Activated CD4-positive, alpha-beta T cell treated with anti-CD3 and anti-CD28 coated beads, Interleukin-2, amount 10 ng/mL, durations not matched to agents 24 days and 14 days (primary cell): ENCODE measurements at regions of chr10 and their contacts with region 1.

Region 1: GRCh38 chr10:50624866-50625692 is 1.3 kb upstream of the SGMS1 start:
- DNase-seq: peak; percentile 86
- H3K4me3 Mint-ChIP-seq: peak overlapping the region; percentile 90
- H3K27ac Mint-ChIP-seq: peak overlapping the region; percentile 92
- H3K4me1 Mint-ChIP-seq: peaks cover 34% of the 10 kb centered on the region
- H3K27me3 Mint-ChIP-seq: peaks cover 3% of the 10 kb centered on the region

Region 2: GRCh38 chr10:50325449-50326171 is 299.5 kb before region 1 on chr10:
- intact Hi-C with region 1: loop called (anchors 2 kb)
- DNase-seq: peak; percentile 74
- H3K4me3 Mint-ChIP-seq: peak overlapping the region; percentile 57
- H3K27ac Mint-ChIP-seq: peak overlapping the region; percentile 39
- H3K4me1 Mint-ChIP-seq: peaks cover 47% of the 10 kb centered on the region
- H3K27me3 Mint-ChIP-seq: no peaks in the 10 kb centered on the region

Region 3: GRCh38 chr10:50417886-50418830 is 206.9 kb before region 1 on chr10:
- intact Hi-C with region 1: loop called (anchors 1 kb)
- DNase-seq: peak; percentile 88
- H3K4me3 Mint-ChIP-seq: peak overlapping the region; percentile 86
- H3K27ac Mint-ChIP-seq: peak overlapping the region; percentile 82
- H3K4me1 Mint-ChIP-seq: peaks cover 45% of the 10 kb centered on the region
- H3K27me3 Mint-ChIP-seq: no peaks in the 10 kb centered on the region

Region 4: GRCh38 chr10:50508315-50509051 is 116.6 kb before region 1 on chr10:
- intact Hi-C with region 1: loop called (anchors 2 kb)
- DNase-seq: peak; percentile 75
- H3K4me3 Mint-ChIP-seq: no peak overlapping the region
- H3K27ac Mint-ChIP-seq: no peak overlapping the region
- H3K4me1 Mint-ChIP-seq: peaks cover 66% of the 10 kb centered on the region
- H3K27me3 Mint-ChIP-seq: no peaks in the 10 kb centered on the region

Region 5: GRCh38 chr10:50574305-50574704 is 50.8 kb before region 1 on chr10:
- intact Hi-C with region 1: loop called (anchors 2 kb)
- DNase-seq: no peak
- H3K4me3 Mint-ChIP-seq: no peak overlapping the region
- H3K27ac Mint-ChIP-seq: no peak overlapping the region
- H3K4me1 Mint-ChIP-seq: peaks cover 11% of the 10 kb centered on the region
- H3K27me3 Mint-ChIP-seq: no peaks in the 10 kb centered on the region

Region 6: DNA sequence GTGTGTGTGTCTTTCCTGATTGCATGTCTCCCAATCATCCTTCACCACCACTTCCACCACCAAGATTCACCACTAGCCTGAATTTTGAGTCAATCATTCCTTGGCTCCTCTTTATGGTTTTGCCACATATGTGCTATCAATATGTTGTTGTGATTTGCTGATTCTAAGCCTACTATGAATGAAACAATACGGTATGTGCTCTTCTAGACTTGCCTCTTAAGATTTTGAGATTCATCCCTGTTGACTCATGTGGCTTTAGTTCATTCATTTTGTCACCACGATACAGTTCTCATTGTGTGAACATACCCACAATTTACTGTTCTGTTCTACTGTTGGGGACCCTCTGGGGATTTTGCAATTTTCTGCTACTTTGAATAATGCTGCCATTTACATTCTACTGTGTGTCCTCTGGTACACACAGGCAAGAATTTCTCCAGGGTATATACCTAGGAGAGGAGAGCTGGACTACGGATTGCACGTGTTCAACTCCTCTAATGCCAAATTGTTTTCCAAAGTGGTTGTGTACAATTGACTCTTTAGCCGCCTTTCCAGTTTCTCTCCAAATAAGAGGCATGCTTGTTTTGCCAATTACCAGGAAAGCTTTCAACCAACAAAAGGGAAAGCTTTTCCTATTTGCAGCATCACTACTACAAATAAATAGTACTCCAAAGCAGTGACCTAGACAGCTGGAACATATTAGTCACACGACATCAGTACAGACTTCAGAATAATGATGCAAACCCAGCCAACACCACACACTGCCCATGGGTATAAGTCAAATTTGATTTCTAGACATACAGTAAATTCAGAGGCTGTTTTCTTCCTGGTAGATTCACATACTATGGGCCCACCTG is 31.3 kb before region 1 on chr10:
- intact Hi-C with region 1: no loop called
- DNase-seq: no peak
- H3K4me3 Mint-ChIP-seq: no peak overlapping the region
- H3K27ac Mint-ChIP-seq: no peak overlapping the region
- H3K4me1 Mint-ChIP-seq: peaks cover 5% of the 10 kb centered on the region
- H3K27me3 Mint-ChIP-seq: no peaks in the 10 kb centered on the region

Region 7: GRCh38 chr10:50636618-50637579 is 11.8 kb after region 1 on chr10:
- intact Hi-C with region 1: loop called (anchors 1 kb)
- DNase-seq: peak; percentile 83
- H3K4me3 Mint-ChIP-seq: peak overlapping the region; percentile 65
- H3K27ac Mint-ChIP-seq: peak overlapping the region; percentile 73
- H3K4me1 Mint-ChIP-seq: peaks cover 30% of the 10 kb centered on the region
- H3K27me3 Mint-ChIP-seq: peaks cover 60% of the 10 kb centered on the region

Region 8: GRCh38 chr10:50648089-50648934 is 23.2 kb after region 1 on chr10:
- intact Hi-C with region 1: no loop called
- DNase-seq: no peak
- H3K4me3 Mint-ChIP-seq: no peak overlapping the region
- H3K27ac Mint-ChIP-seq: no peak overlapping the region
- H3K4me1 Mint-ChIP-seq: peaks cover 5% of the 10 kb centered on the region
- H3K27me3 Mint-ChIP-seq: peaks cover 13% of the 10 kb centered on the region